AG04449 (cell line): ENCODE measurements at regions of chr1 and their contacts with region 1.

Region 1: DNA sequence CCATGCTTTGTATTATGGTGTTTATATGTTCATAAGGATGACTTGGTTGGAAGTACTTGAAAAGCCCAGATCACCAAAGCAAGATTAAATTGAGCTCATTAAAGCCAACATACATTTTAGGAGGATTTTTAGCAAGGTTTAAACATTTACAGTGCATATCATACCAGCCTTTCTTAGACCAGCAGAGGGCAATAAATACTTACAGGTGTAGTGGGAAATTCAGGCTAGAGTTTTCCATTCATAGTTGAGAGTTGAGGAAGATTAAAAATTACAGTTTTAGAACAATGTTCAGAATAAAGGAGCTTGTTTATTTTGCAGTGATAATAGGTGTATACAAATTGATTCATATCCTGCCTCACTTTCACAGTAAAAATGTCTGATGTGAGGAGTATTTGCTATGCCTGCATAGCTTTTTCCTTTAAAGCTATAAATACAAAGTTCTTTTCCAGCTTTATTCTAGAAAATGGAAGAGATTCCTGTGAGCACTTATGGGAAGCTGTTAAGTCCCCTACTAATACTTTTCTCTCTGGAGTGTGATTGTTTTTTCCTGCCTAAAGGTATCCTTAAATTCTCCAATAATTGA is 35.3 kb downstream of the DTL start:
- DNase-seq: no peak
- H3K4me3 ChIP-seq: no peak overlapping the region
- CTCF ChIP-seq: peak; percentile 53

Region 2: GRCh38 chr1:211680752-211681327 is 390.0 kb before region 1 on chr1:
- CTCF ChIA-PET with region 1: interaction called, 25 read pairs
- POLR2A ChIA-PET with region 1: no interaction called
- DNase-seq: peak; percentile 57
- H3K4me3 ChIP-seq: no peak overlapping the region
- CTCF ChIP-seq: peak; percentile 58

Region 3: DNA sequence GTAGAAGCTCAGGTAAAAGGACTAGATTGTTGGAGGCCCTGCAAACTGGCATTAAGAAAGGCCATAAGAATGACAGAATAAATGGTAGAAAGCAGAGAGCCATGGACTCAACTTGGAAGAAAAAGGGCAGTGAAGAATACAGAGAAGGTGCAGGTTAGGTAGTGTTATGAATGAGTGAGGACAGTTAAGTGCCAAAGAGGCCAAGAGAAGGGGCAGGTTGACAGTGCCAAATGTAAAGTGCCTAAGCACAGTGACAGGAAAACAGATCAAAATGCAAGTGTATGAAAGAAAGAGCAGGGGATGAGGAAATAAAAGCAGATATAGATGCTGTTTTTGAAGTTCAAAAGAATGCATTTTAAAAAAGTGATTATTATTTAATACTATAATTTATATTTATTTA is 79.1 kb before region 1 on chr1:
- CTCF ChIA-PET with region 1: no interaction called
- POLR2A ChIA-PET with region 1: no interaction called
- DNase-seq: no peak
- H3K4me3 ChIP-seq: no peak overlapping the region
- CTCF ChIP-seq: no peak

Region 4: DNA sequence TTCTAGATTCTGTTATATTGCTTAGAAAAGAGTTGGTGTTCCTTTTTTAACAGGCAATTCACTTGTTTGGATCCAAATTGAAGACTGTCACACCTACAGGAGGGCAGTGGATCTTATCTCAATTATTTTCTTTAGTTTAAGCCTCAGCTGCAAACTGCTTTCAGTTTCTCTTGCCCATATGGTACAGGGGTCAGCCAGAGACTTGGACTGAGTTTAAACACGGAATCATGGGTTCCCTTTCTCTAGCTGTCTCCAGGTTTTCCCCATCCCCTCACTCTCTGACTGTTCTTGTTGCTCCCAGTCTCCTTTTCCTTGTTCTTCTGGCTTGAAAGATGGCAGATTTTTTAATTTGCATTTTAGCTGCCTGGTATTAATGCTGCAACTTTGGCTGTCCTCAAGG is 16.8 kb before region 1 on chr1:
- CTCF ChIA-PET with region 1: interaction called, 18 read pairs
- POLR2A ChIA-PET with region 1: no interaction called
- DNase-seq: no peak
- H3K4me3 ChIP-seq: no peak overlapping the region
- CTCF ChIP-seq: no peak

Region 5: DNA sequence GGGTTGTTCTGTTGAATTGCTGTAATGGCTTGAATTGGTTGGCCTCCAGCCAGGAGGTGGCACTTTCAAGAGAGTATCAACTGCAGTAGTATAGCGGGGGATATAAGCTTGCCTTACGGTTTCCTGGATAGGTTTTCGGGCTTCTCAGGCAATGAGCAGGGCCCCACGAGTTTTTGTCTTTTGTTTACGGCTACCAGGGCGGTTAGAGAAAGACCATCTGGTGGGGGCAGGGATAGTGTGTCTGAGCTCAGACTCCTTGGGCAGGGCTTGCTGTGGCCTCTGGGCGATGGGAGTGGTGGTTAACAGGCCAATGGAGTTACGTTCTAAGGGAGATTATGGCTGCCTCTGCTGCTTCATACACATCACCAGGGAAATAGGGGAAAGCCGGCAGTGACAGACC is 27.5 kb after region 1 on chr1:
- CTCF ChIA-PET with region 1: interaction called, 11 read pairs
- POLR2A ChIA-PET with region 1: no interaction called
- DNase-seq: no peak
- H3K4me3 ChIP-seq: no peak overlapping the region
- CTCF ChIP-seq: no peak

Region 6: GRCh38 chr1:212315907-212316306 is 245.1 kb after region 1 on chr1:
- CTCF ChIA-PET with region 1: interaction called, 129 read pairs
- POLR2A ChIA-PET with region 1: no interaction called
- DNase-seq: no peak
- H3K4me3 ChIP-seq: no peak overlapping the region
- CTCF ChIP-seq: no peak

Region 7: DNA sequence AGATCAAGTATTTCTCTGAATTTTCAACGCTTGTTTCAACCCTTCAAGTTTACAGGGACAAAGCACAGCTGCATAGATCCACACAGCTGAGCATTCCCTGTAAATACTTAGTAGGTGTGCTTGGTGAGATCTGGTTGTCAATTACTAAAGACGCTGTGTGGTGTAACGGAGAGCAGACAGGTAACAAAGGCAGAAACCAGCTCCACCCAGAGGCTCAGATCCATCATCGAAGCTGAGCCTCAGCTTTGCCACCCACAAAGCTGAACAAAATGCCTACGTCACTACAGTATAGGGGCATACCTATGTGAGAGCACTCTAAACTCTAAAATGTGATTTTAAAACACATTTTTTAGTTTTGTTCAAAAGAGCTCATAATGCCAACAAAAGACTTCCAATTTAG is 305.2 kb after region 1 on chr1:
- CTCF ChIA-PET with region 1: interaction called, 302 read pairs
- POLR2A ChIA-PET with region 1: no interaction called
- DNase-seq: no peak
- H3K4me3 ChIP-seq: no peak overlapping the region
- CTCF ChIP-seq: no peak